Mammary epithelial cell (primary cell): ENCODE measurements at regions of chr3 and their contacts with region 1.

Region 1: GRCh38 chr3:50982540-50983325 is 308.0 kb downstream of the DOCK3 start:
- DNase-seq: no peak
- H3K4me3 ChIP-seq: no peak overlapping the region
- H3K27ac ChIP-seq: no peak overlapping the region
- H3K4me1 ChIP-seq: no peaks in the 10 kb centered on the region
- H3K27me3 ChIP-seq: peaks cover 2% of the 10 kb centered on the region
- CTCF ChIP-seq: no peak

Region 2: GRCh38 chr3:50850639-50851511 is 131.9 kb before region 1 on chr3:
- CTCF ChIA-PET with region 1: no interaction called
- dilution Hi-C with region 1: no loop called
- in situ Hi-C with region 1: no loop called
- intact Hi-C with region 1: no loop called
- DNase-seq: peak; percentile 36
- H3K4me3 ChIP-seq: no peak overlapping the region
- H3K27ac ChIP-seq: no peak overlapping the region
- H3K4me1 ChIP-seq: peaks cover 17% of the 10 kb centered on the region
- H3K27me3 ChIP-seq: no peaks in the 10 kb centered on the region
- CTCF ChIP-seq: peak in 1 of 2 donors; percentile 31

Region 3: GRCh38 chr3:51099794-51100535 is 117.2 kb after region 1 on chr3:
- CTCF ChIA-PET with region 1: no interaction called
- dilution Hi-C with region 1: no loop called
- in situ Hi-C with region 1: no loop called
- intact Hi-C with region 1: loop called (anchors 10 kb)
- DNase-seq: peak; percentile 46
- H3K4me3 ChIP-seq: no peak overlapping the region
- H3K27ac ChIP-seq: no peak overlapping the region
- H3K4me1 ChIP-seq: no peaks in the 10 kb centered on the region
- H3K27me3 ChIP-seq: no peaks in the 10 kb centered on the region
- CTCF ChIP-seq: peak; percentile 75 to 84